ENCODE measurements at regions of chr15 and their contacts with region 1.

Region 1: DNA sequence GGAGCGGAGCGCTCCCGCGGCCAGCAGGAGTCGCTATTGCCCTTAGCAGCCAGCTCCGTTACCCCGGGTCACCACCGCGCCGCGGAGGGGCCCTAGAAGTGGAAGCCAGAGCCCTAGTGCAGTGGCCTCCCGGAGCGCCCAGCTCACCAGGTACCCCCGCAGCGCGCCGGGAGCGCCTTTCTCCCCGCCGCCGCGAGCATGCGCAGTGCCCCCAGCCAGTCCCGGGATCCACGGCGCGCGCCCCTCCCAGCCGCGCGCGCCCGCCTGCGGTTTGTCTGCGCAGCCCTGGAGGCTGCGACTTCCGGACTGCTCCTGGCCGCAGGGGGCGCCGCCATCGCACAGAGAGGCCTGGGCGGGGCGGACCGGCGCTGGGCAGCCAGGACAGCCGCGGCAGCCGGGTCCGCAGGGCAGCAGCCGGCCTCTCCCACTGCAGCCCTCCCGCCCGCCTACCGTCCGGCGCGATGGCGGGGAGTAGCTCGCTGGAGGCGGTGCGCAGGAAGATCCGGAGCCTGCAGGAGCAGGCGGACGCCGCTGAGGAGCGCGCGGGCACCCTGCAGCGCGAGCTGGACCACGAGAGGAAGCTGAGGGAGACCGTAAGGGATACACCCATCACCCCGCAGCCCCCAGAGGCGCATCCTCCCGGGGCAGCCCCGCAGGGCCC is 5.7 kb downstream of the TPM1 start:
- DNase-seq: peak; percentile 83 to 85 (median 85)
- H3K4me3 ChIP-seq: peak overlapping the region; percentile 50 to 72
- H3K4me3 Mint-ChIP-seq: peak overlapping the region; percentile 76 to 96 (median 88)
- H3K27ac ChIP-seq: peak overlapping the region; percentile 24
- H3K27ac Mint-ChIP-seq: peak overlapping the region; percentile 42 to 92 (median 68)
- H3K4me1 ChIP-seq: peaks cover 28% of the 10 kb centered on the region
- H3K4me1 Mint-ChIP-seq: peaks cover 9 to 36% (median 23%) of the 10 kb centered on the region in 4 donors
- H3K27me3 ChIP-seq: peaks cover 23% of the 10 kb centered on the region
- H3K27me3 Mint-ChIP-seq: peaks cover 23 to 32% of the 10 kb centered on the region in 2 donors

Region 2: DNA sequence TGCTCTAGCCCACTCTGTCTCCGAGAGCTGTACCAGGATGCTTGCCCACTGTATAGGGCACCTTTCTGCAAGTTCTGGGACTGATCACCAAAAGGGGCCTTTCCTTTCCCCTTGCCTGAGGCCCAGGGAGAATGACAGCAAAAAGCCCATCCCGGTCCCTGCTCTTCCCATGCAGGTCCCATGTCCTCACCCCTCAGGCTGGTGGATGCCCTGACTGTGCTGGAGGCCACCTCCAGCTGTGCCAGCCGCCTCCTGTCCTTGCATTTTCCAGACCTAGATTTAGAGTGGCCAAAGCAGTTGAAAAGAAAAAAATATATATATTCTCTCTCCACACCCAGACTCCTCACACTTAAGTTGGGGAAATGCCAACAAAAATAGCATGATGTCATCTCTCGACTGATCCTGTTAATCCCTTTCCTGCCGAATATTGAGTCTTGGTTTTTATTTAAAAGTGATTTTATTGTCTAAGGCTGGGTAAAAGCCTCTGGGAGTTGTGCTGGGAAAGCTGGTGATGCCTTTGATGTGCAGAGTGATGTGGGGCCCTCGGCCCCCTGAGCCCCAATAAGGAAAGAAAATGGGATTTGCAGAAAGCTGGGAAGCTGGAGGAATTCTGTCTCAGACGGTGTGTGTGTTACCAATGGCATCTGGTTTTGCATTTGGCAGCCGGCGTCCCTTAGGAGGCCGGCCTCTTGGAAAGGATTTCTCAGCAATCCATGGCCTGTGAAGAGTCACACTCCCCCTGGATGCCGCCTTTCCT is 35.0 kb before region 1 on chr15:
- CTCF ChIA-PET with region 1: no interaction called
- POLR2A ChIA-PET with region 1: no interaction called
- intact Hi-C with region 1: no loop called
- DNase-seq: no peak
- H3K4me3 ChIP-seq: no peak overlapping the region
- H3K4me3 Mint-ChIP-seq: no peak overlapping the region
- H3K27ac ChIP-seq: no peak overlapping the region
- H3K27ac Mint-ChIP-seq: no peak overlapping the region
- H3K4me1 ChIP-seq: no peaks in the 10 kb centered on the region
- H3K4me1 Mint-ChIP-seq: no peaks in the 10 kb centered on the region
- H3K27me3 ChIP-seq: no peaks in the 10 kb centered on the region
- H3K27me3 Mint-ChIP-seq: peaks cover 0 to 3% of the 10 kb centered on the region in 2 donors

Region 3: DNA sequence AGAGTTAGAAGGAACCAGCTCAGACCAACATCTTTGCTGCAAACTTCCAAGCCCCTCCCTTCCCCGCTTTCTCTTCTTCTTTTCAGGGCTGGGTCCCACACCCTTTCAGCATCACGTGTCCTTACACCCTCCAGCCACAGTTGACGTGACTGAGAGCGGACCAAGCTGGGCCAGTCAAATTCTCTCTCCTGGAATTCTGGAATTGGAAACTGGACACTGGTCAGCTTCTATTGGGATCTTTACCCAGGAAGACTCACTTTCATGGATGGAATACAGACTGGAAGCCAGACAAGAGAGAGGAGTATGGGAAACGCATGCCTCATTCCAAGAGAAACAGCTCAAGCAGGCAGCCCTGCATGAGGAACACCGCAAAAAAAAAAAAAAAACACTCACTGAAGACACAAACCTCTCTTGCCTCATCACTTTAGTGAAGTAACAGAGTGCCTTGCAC is 18.1 kb before region 1 on chr15:
- CTCF ChIA-PET with region 1: interaction called, 15 read pairs
- POLR2A ChIA-PET with region 1: no interaction called
- intact Hi-C with region 1: no loop called
- DNase-seq: no peak
- H3K4me3 ChIP-seq: no peak overlapping the region
- H3K4me3 Mint-ChIP-seq: no peak overlapping the region
- H3K27ac ChIP-seq: no peak overlapping the region
- H3K27ac Mint-ChIP-seq: no peak overlapping the region
- H3K4me1 ChIP-seq: no peaks in the 10 kb centered on the region
- H3K4me1 Mint-ChIP-seq: no peaks in the 10 kb centered on the region
- H3K27me3 ChIP-seq: peaks cover 5% of the 10 kb centered on the region
- H3K27me3 Mint-ChIP-seq: peaks cover 14 to 24% of the 10 kb centered on the region in 2 donors

Region 4: DNA sequence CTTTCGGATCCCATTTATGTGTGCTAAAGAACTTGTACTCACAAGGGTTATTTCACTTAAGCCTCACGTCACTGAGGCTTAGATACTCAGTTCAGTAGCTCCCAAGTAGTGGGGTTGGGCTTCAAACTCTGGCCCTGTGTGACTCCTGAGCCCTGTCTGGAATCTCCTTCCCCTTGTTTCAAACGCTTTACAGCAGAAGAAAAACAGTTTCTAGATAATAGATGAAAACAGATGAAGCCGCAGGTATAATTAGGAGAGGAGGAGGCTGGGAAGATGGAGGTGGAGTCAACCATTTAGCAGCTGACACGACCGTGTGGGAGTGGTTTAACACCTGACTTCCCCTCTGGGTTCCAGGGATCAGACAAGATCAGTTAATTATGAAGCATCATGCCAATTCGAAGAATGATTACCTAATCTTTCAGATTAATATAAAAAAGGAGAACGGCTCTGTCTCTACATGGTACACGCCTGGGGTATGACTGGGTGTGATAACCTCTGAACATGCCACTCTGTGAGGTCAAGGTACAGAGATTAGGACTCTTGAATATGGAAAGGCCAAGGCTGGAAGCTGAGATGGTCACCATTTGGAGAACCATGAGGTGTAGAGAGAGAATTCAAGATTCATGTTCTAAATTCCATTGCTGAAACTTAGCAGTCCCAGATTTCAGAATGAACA is 25.4 kb after region 1 on chr15:
- CTCF ChIA-PET with region 1: interaction called, 14 read pairs
- POLR2A ChIA-PET with region 1: no interaction called
- intact Hi-C with region 1: no loop called
- DNase-seq: no peak
- H3K4me3 ChIP-seq: no peak overlapping the region
- H3K4me3 Mint-ChIP-seq: no peak overlapping the region
- H3K27ac ChIP-seq: no peak overlapping the region
- H3K27ac Mint-ChIP-seq: peak overlapping the region in 1 of 7 donors; percentile 85
- H3K4me1 ChIP-seq: no peaks in the 10 kb centered on the region
- H3K4me1 Mint-ChIP-seq: peaks cover 0 to 6% (median under 1%) of the 10 kb centered on the region in 4 donors
- H3K27me3 ChIP-seq: peaks cover 7% of the 10 kb centered on the region
- H3K27me3 Mint-ChIP-seq: peaks cover 0 to 5% of the 10 kb centered on the region in 2 donors

Region 5: DNA sequence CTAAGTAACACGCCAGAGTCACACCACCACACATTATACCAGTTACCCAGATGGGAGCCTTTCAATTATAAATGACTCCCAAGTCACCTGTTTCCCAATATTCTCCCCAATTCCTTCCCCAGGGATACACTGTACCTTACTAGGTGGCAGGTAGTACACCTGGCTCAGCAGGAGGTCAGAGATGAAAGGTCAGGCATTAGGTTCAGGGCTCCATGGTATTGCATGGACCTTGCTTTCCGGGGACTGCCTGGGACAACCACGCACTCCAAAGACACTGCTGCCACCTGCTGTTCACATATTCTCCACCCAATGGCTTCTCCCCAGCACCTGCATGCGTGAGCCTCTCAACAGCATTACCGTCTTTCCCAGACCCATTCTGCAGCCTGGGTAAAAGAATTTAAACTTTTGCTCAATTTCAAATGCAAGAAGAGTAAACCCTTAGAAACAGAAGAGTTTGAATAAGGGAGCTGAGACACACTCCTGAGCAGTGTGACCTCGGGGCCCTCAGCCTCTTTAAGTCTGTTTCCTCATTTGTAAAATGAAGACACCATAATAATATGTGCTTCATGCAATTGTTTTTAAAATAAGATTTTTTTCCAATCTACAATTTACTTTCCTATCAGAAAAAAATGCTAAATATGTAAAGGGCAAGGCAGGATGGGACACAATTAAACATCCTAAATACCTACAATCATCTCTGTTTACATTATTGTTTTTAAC is 45.4 kb after region 1 on chr15:
- CTCF ChIA-PET with region 1: interaction called, 118 read pairs
- POLR2A ChIA-PET with region 1: no interaction called
- intact Hi-C with region 1: loop called (anchors 1 kb)
- DNase-seq: peak; percentile 57 to 62 (median 57)
- H3K4me3 ChIP-seq: no peak overlapping the region
- H3K4me3 Mint-ChIP-seq: no peak overlapping the region
- H3K27ac ChIP-seq: no peak overlapping the region
- H3K27ac Mint-ChIP-seq: no peak overlapping the region
- H3K4me1 ChIP-seq: no peaks in the 10 kb centered on the region
- H3K4me1 Mint-ChIP-seq: peaks cover 0 to 2% (median 0%) of the 10 kb centered on the region in 4 donors
- H3K27me3 ChIP-seq: no peaks in the 10 kb centered on the region
- H3K27me3 Mint-ChIP-seq: peaks cover 0 to 2% of the 10 kb centered on the region in 2 donors

Region 6: GRCh38 chr15:63277038-63277892 is 229.0 kb after region 1 on chr15 and contains the start of gene APH1B:
- CTCF ChIA-PET with region 1: no interaction called
- POLR2A ChIA-PET with region 1: interaction called, 4 read pairs
- intact Hi-C with region 1: loop called (anchors 2 kb)
- DNase-seq: peak; percentile 75 to 83 (median 77)
- H3K4me3 ChIP-seq: peak within 1 kb of the TSS; percentile 66 to 84
- H3K4me3 Mint-ChIP-seq: peak within 1 kb of the TSS; percentile 84 to 90 (median 88)
- H3K27ac ChIP-seq: peak within 1 kb of the TSS; percentile 68
- H3K27ac Mint-ChIP-seq: peak within 1 kb of the TSS; percentile 79 to 94 (median 92)
- H3K4me1 ChIP-seq: peaks cover 31% of the 10 kb centered on the region
- H3K4me1 Mint-ChIP-seq: peaks cover 19 to 46% (median 31%) of the 10 kb centered on the region in 4 donors
- H3K27me3 ChIP-seq: no peaks in the 10 kb centered on the region
- H3K27me3 Mint-ChIP-seq: no peaks in the 10 kb centered on the region
- total RNA-seq, gene APH1B: 23.0 to 28.4 TPM

Measured in CD4-positive, alpha-beta memory T cell (primary cell).